SK-N-SH (cell line): ENCODE measurements at regions of chr3 and their contacts with region 1.

Region 1: DNA sequence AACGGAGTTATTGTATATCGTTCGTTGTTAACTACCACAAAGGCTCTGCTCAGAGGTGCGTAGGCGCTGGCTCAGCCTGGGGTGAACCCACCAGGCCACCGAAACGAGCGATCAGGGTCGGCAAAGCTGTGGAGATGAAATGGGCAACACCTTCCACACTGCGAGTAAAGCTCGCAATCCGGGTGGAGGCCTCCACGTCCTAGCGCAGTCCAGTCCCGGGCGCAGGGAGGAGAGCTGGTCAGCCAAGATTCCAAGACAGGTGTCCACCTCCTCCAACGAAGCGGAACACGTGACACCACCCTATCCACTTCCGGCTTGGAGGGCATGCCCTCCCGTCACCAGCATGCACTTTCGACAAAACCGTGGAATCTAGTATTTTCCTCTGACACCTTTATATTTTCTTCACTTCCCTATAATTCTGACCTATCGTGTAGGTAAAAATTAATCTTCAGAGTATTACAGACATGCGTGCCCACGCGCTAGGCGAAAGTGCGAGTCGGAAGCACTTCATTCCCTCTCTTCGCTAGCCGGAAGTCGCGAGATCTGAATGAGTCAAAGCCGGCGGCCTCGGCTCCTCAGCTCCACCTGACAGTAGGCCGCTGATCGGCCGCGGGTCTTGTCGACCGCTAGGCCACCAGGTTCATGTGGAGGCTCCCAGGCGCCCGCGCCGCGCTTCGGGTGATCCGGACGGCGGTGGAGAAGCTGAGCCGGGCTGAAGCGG is at the start of gene PDE12:
- DNase-seq: peak; percentile 88
- H3K4me3 ChIP-seq: peak within 1 kb of the TSS; percentile 81 to 88
- H3K27ac ChIP-seq: peak within 1 kb of the TSS; percentile 74 to 96
- H3K4me1 ChIP-seq: peaks cover 0 to 12% of the 10 kb centered on the region in 2 experiments; a peak in 2 of 4 replicates
- H3K27me3 ChIP-seq: no peaks in the 10 kb centered on the region
- CTCF ChIP-seq: no peak
- EP300 ChIP-seq: peak; percentile 76 to 97; a peak in 3 of 4 replicates
- RAD21 ChIP-seq: 0 out of 2 replicates have a peak, but pooled peaks have one; percentile 18
- polyA plus RNA-seq, gene PDE12: 7.4 and 9.5 TPM in 2 replicates

Region 2: DNA sequence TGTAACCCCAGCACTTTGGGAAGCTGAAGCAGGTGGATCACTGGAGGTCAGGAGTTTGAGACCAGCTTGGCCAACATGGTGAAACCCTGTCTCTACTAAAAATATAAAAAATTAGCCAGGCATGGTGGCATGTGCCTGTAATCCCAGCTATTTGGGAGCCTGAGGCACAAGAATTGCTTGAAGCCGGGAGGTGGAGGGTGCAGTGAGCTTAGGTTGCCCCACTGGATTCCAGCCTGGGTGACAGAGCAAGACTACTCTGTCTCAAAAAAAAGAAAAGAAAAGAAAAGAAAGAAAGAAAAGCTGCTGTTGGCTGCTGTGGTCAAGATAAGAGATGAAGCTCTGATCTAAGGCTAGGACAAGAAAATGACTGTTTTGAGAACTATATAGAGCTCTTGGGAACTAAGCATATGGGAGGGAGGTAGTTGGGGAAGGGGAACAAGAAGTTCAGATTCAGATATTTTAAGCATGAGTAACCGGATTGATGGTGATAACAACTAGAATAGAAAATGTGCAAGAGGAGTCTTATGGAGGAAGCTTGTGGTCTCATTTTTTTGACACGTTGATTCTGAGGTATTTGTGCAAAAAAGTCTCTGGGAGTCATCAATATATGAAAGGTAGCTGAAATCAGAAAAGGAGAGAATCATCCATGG is 37.5 kb before region 1 on chr3:
- CTCF ChIA-PET with region 1: no interaction called
- POLR2A ChIA-PET with region 1: no interaction called
- DNase-seq: no peak
- H3K4me3 ChIP-seq: no peak overlapping the region
- H3K27ac ChIP-seq: peak overlapping the region in 1 of 2 experiments; percentile 28; a peak in 1 of 4 replicates
- H3K4me1 ChIP-seq: peaks cover 0 to 6% of the 10 kb centered on the region in 2 experiments; a peak in 1 of 4 replicates
- H3K27me3 ChIP-seq: no peaks in the 10 kb centered on the region
- CTCF ChIP-seq: no peak
- EP300 ChIP-seq: no peak
- RAD21 ChIP-seq: no peak

Region 3: DNA sequence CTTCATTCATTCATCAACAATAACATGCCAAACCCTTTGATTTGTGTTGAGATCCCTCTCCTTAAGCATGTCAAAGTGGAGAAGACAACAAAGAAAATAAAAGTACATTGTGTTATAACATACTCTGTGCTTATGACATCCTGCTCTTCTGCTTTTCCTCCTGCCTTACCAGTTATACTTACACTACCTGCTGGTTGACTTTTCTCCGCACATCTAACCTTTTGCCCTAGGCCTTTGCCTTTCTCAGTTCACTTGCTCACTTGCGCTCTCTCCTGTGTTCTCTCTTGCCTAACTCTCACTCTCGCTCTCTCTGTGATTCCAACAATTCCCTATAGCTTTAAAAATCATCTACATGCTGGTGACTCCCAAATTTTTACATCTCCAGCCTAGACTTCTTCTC is 17.4 kb before region 1 on chr3:
- CTCF ChIA-PET with region 1: no interaction called
- POLR2A ChIA-PET with region 1: no interaction called
- DNase-seq: no peak
- H3K4me3 ChIP-seq: no peak overlapping the region
- H3K27ac ChIP-seq: no peak overlapping the region
- H3K4me1 ChIP-seq: no peaks in the 10 kb centered on the region
- H3K27me3 ChIP-seq: no peaks in the 10 kb centered on the region
- CTCF ChIP-seq: no peak
- EP300 ChIP-seq: no peak
- RAD21 ChIP-seq: no peak

Region 4: DNA sequence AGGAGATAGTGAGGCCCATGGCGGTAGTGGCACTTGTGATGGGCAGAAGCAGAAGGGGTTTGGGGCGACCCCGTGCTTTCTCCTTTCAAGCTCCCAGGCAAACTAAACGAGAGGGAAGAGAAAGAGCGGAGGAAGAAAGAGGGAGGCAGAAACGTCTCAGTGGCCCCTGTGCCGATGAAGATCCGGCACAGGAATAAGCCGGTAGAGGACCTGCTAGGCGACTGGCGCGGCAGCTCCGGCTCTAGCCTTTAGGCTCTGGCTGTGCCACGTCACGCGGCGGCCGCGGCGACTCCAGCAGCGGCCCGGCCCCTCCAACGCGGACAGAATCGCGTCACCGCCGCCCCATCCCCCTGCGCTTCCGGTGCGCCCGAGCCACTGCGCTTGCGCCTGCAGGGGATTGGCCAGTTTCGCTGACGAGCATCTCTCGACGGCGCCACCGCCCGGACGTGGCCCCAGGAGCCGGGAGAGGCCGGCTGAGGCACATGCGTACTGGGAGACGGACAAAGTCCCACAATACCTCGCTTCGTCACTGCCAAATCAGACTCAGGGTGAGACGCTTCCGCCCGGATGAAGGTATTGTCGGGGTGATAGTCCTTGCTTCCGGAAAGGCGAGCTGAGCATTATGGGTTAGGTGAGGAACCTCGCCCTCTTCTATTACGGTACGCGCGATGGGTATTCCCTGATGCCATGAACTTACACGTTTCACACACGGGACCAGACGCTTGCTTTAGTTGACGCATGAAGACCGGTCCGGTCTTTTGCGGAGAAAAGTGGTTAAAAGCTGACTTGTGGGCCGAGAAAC is 41.4 kb after region 1 on chr3 and contains the start of gene ARF4:
- CTCF ChIA-PET with region 1: interaction called, 5 read pairs
- POLR2A ChIA-PET with region 1: interaction called, 19 read pairs
- DNase-seq: peak; percentile 97
- H3K4me3 ChIP-seq: peak within 1 kb of the TSS; percentile 91
- H3K27ac ChIP-seq: peak within 1 kb of the TSS; percentile 96 to 100
- H3K4me1 ChIP-seq: peaks cover 3 to 13% of the 10 kb centered on the region in 2 experiments; a peak in 3 of 4 replicates
- H3K27me3 ChIP-seq: no peaks in the 10 kb centered on the region
- CTCF ChIP-seq: no peak; the same call in 1 of the 2 replicates
- EP300 ChIP-seq: no peak; a peak in 1 of 4 replicates
- RAD21 ChIP-seq: no peak
- polyA plus RNA-seq, gene ARF4: 150 and 208 TPM in 2 replicates